ENCODE measurements at regions of chr18 and their contacts with region 1.

Region 1: GRCh38 chr18:34128436-34128835 is 96.3 kb downstream of the NOL4 start:
- DNase-seq: no peak
- H3K4me3 ChIP-seq: no peak overlapping the region
- H3K27ac ChIP-seq: no peak overlapping the region
- H3K4me1 ChIP-seq: no peaks in the 10 kb centered on the region
- H3K27me3 ChIP-seq: no peaks in the 10 kb centered on the region
- CTCF ChIP-seq: no peak

Region 2: DNA sequence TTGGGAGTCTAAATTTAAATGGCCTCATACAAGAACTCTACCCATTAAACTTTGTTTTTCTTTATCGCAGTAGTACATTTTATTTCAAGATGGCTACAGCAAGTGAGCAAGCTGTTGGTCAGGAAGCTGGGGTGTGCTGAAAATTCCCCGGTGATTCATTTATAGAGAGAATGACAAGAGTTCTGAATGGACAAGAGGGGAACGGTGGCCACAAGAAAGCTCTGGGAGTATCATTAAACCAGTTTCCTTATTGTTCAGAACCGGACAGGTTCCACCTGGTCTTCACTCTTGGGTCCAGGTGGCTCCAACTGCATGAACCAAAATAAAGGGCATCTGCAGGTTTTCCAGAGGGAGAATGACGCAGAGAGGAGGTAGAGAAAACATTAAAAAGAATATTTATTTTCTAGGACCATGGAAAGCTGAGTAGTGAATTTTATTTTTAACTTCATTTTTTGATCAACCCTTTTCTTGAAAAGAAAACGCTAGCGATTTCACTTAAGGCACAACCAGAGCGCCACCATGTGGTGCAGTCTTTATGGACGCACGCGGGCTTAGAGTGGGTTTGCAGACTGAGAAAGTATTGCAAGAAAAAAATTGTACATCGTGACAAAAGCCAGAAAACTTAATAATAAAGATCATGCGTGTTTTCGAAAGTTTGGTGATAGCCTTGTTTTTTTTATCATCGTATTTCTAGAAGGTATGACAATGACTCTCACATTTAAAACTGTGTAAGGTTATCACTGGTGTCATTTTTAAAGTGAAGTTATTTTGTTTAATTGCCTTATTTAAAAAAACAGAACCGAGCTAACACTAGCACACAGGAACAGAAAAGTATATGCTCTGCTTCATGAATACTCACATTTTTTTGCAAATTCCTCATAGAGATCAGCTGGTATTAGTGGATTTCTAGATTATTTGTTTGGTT is 194.2 kb after region 1 on chr18:
- intact Hi-C with region 1: loop called (anchors 5 kb)
- DNase-seq: peak; percentile 67
- H3K4me3 ChIP-seq: no peak overlapping the region
- H3K27ac ChIP-seq: no peak overlapping the region
- H3K4me1 ChIP-seq: no peaks in the 10 kb centered on the region
- H3K27me3 ChIP-seq: no peaks in the 10 kb centered on the region
- CTCF ChIP-seq: peak; percentile 52

Measured in colonic mucosa (tissue), 4 donors.